PC-3 (cell line): ENCODE measurements at regions of chr1 and their contacts with region 1.

Region 1: DNA sequence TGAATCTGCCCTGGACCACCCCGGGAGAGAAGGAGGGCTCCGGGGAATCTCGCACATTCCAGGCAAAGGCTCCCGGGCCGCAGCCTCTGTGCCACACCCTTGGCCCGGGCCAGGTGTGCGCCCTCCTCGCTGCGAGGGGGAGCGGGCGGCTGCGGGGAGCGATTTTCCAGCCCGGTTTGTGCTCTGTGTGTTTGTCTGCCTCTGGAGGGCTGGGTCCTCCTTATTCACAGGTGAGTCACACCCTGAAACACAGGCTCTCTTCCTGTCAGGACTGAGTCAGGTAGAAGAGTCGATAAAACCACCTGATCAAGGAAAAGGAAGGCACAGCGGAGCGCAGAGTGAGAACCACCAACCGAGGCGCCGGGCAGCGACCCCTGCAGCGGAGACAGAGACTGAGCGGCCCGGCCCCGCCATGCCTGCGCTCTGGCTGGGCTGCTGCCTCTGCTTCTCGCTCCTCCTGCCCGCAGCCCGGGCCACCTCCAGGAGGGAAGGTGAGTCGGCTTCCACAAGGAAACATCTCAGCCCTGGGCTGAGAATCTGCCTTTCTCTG is at the start of gene LAMC2:
- DNase-seq: peak; percentile 93
- ATAC-seq: peak; percentile 96
- H3K4me3 ChIP-seq: peak within 1 kb of the TSS; percentile 86
- H3K27ac ChIP-seq: peak within 1 kb of the TSS; percentile 98
- H3K4me1 ChIP-seq: peaks cover 35% of the 10 kb centered on the region
- H3K27me3 ChIP-seq: no peaks in the 10 kb centered on the region
- CTCF ChIP-seq: peak; percentile 58
- total RNA-seq, gene LAMC2: 105 and 127 TPM in 2 replicates

Region 2: GRCh38 chr1:182962554-182963115 is 223.4 kb before region 1 on chr1:
- CTCF ChIA-PET with region 1: no interaction called
- POLR2A ChIA-PET with region 1: no interaction called
- intact Hi-C with region 1: loop called (anchors 1 kb)
- DNase-seq: peak; percentile 80
- ATAC-seq: peak; percentile 100
- H3K4me3 ChIP-seq: peak overlapping the region; percentile 60
- H3K27ac ChIP-seq: peak overlapping the region; percentile 43
- H3K4me1 ChIP-seq: peaks cover 5% of the 10 kb centered on the region
- H3K27me3 ChIP-seq: no peaks in the 10 kb centered on the region
- CTCF ChIP-seq: peak; percentile 90

Region 3: DNA sequence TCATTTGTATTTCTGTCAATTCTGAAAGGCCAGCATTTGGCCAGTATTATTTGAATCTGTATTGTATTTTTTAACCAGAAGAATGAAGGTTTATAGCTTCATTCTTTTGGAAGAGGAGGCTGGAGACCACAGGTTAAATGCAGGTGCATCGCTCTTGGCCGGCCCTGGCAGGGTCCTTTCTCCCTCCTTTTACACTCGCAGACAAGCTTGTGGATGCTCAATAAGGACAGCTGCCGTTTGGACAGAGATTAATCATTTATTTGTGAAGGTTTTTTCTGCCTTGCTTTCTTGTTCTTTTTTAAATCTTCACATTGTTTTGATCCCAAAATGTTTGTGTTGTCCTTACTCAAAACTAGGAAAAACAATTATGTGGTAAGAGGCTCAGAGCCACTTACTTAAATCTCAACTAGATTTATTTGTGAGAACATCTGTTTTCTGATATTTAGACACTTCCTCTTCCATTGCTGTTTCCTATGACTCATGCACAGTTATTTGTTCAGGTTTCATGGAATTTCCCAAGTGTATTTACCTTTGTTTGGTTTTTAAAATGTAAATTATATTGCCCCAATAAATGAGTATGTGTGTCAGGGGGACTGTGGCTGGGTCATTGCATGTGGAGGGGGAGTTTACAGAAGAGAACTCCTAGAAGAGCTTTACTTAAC is 46.6 kb before region 1 on chr1:
- CTCF ChIA-PET with region 1: no interaction called
- POLR2A ChIA-PET with region 1: no interaction called
- intact Hi-C with region 1: loop called (anchors 1 kb)
- DNase-seq: peak; percentile 85
- ATAC-seq: peak; percentile 87
- H3K4me3 ChIP-seq: peak overlapping the region; percentile 26; the same call in 1 of the 2 replicates
- H3K27ac ChIP-seq: peak overlapping the region; percentile 96
- H3K4me1 ChIP-seq: peaks cover 31% of the 10 kb centered on the region
- H3K27me3 ChIP-seq: no peaks in the 10 kb centered on the region
- CTCF ChIP-seq: no peak

Region 4: DNA sequence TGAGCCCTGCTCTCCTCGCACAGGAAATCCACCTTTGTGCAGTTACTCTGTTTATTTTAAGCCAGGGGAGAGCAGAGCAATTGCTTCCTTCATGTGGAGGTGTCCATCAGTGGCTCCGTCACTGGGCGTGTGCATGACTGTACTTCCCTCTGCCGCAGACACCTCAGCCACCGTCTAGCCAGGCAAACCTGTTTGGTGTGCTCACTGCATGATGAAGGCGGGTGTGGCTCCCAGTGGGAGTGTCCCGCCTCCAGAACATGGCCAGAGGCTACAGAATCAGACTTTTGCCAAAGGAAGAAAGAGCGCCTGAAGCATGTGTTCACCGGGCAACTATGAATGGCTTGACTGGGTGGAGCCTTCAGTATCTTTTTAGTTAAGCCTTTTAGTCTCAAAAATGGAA is 26.1 kb before region 1 on chr1:
- CTCF ChIA-PET with region 1: interaction called, 3 read pairs
- POLR2A ChIA-PET with region 1: interaction called, 6 read pairs
- intact Hi-C with region 1: loop called (anchors 1 kb)
- DNase-seq: peak; percentile 98
- ATAC-seq: peak; percentile 74
- H3K4me3 ChIP-seq: no peak overlapping the region
- H3K27ac ChIP-seq: peak overlapping the region; percentile 98
- H3K4me1 ChIP-seq: peaks cover 63% of the 10 kb centered on the region
- H3K27me3 ChIP-seq: no peaks in the 10 kb centered on the region
- CTCF ChIP-seq: no peak

Region 5: GRCh38 chr1:183209533-183210158 is 23.6 kb after region 1 on chr1:
- CTCF ChIA-PET with region 1: no interaction called
- POLR2A ChIA-PET with region 1: no interaction called
- intact Hi-C with region 1: loop called (anchors 1 kb)
- DNase-seq: peak; percentile 88
- ATAC-seq: peak; percentile 87
- H3K4me3 ChIP-seq: no peak overlapping the region
- H3K27ac ChIP-seq: peak overlapping the region; percentile 55
- H3K4me1 ChIP-seq: peaks cover 24% of the 10 kb centered on the region
- H3K27me3 ChIP-seq: no peaks in the 10 kb centered on the region
- CTCF ChIP-seq: no peak